ENCODE measurements at regions of chr11 and their contacts with region 1.

Region 1: GRCh38 chr11:87097582-87097981 is 59.8 kb downstream of the TMEM135 start:
- DNase-seq: peak; percentile 62 to 84 (median 66)
- ATAC-seq: peak; percentile 99
- H3K4me3 ChIP-seq: no peak overlapping the region
- H3K27ac ChIP-seq: peak overlapping the region; percentile 48; the same call in 2 of the 3 replicates
- H3K4me1 ChIP-seq: peaks cover 0 to 9% of the 10 kb centered on the region in 2 experiments; a peak in 2 of 5 replicates
- H3K27me3 ChIP-seq: no peaks in the 10 kb centered on the region
- CTCF ChIP-seq: peak; percentile 76 to 81 (median 80)
- EP300 ChIP-seq: no peak
- POLR2A ChIP-seq: no peak
- RAD21 ChIP-seq: peak; percentile 38 to 57; a peak in 3 of 4 replicates

Region 2: DNA sequence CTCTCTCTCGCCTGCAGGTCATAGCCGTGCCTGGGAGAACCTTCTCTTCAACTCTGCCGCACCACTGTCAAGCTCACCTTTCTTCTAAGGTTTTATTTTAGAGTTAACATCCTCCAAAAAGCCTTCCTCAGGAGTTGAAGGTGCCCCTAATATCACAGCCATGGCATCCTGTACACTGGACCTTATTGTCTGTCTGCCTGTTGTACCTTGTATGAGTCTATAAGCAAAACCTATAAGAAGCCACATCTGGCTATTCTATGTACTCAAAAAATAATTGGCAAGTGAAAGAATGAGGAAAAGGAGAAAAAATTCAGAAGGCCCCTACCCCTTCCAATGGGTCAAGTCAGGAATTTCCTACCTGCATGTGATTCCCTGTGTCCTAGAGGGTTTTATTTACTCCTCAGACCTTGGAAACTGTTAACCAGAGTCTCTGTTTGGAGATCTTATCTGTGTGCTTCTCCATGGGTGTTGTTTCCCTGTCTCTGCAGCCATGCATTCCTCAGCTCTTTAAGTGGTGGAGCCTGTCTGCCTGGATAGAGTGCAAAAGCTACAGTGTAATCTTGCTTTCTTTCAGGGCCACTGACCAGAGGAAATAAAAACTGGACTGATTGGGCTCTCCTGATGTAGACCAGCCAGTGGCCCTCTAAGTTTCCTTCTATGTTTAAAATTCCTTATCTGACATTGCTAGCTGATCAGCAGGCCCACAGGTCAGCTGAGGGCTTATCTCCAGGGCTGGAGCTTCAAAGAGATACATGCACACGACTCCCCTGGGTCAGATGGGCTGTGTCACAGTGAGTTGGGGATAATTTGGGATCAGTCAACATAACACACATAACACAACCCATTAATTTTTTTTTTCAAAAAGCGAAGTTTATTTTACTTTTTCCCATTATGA is 97.5 kb before region 1 on chr11:
- CTCF ChIA-PET with region 1: no interaction called
- POLR2A ChIA-PET with region 1: no interaction called
- in situ Hi-C with region 1: no loop called
- intact Hi-C with region 1: loop called (anchors 5 kb)
- DNase-seq: peak; percentile 68 to 96 (median 81)
- ATAC-seq: peak; percentile 91
- H3K4me3 ChIP-seq: peak overlapping the region; percentile 12; the same call in 1 of the 2 replicates
- H3K27ac ChIP-seq: peak overlapping the region; percentile 87
- H3K4me1 ChIP-seq: peaks cover 18 to 42% of the 10 kb centered on the region in 2 experiments; a peak in 4 of 5 replicates
- H3K27me3 ChIP-seq: no peaks in the 10 kb centered on the region
- CTCF ChIP-seq: no peak
- EP300 ChIP-seq: peak; percentile 96
- POLR2A ChIP-seq: peak; percentile 53
- RAD21 ChIP-seq: peak; percentile 15 to 29; a peak in 3 of 4 replicates

Region 3: DNA sequence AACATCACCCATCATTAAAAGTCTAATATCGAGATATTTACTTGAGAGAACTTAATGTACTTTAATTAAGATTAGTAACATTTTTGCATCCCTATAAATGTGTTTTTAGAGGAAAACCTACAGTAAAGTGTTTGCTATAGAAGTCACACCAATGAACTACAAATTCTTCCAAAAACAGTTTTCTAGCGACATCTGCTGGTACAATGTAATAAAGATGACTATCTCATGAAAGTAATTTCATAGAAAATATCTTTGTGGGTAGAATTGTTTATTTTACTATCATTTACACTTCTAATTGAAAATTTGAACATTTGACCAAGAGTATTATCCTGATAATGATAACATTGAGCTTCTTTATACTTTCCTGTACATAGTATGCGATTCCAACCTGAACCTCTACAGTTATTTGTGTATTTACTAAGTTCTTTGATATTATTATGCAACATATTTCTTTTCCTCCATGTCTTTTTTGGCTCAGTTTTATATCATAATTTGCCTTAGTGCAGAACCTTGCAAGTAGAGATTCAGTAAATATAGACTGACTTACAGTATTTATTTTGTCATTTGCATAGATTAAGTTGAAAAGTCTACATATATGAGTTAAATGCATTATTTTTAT is 192.8 kb after region 1 on chr11:
- CTCF ChIA-PET with region 1: no interaction called
- POLR2A ChIA-PET with region 1: no interaction called
- in situ Hi-C with region 1: no loop called
- intact Hi-C with region 1: loop called (anchors 5 kb)
- DNase-seq: peak; percentile 25 to 72 (median 33)
- ATAC-seq: peak; percentile 80
- H3K4me3 ChIP-seq: no peak overlapping the region
- H3K27ac ChIP-seq: no peak overlapping the region
- H3K4me1 ChIP-seq: no peaks in the 10 kb centered on the region
- H3K27me3 ChIP-seq: no peaks in the 10 kb centered on the region
- CTCF ChIP-seq: peak in 2 of 3 experiments; percentile 42 to 80; a peak in 3 of 6 replicates
- EP300 ChIP-seq: no peak
- POLR2A ChIP-seq: no peak
- RAD21 ChIP-seq: peak; percentile 88 to 90

Region 4: DNA sequence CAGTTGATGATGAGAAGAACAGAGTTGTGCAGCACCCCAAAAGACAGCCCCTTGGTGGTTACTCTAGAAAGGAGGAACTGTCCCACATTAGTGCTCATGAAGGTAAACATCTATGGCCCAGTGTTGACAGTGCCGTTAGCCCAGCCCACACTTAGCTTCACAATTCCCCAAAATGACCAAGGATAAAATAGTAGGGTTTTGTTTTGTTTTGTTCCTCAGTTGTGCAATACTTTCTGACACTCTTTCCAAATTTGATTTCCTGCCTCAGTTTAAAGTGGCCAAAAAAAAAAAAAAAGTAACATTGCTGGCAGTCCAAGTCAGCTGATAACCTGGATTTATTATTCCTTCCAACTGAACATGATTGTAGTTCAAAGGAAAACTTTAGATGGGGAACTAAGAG is 209.5 kb after region 1 on chr11:
- CTCF ChIA-PET with region 1: no interaction called
- POLR2A ChIA-PET with region 1: no interaction called
- in situ Hi-C with region 1: no loop called
- intact Hi-C with region 1: no loop called
- DNase-seq: no peak
- ATAC-seq: no peak
- H3K4me3 ChIP-seq: no peak overlapping the region
- H3K27ac ChIP-seq: no peak overlapping the region
- H3K4me1 ChIP-seq: no peaks in the 10 kb centered on the region
- H3K27me3 ChIP-seq: no peaks in the 10 kb centered on the region
- CTCF ChIP-seq: no peak
- EP300 ChIP-seq: no peak
- POLR2A ChIP-seq: no peak
- RAD21 ChIP-seq: no peak

Region 5: GRCh38 chr11:87722756-87723565 is 625.4 kb after region 1 on chr11:
- CTCF ChIA-PET with region 1: no interaction called
- POLR2A ChIA-PET with region 1: no interaction called
- in situ Hi-C with region 1: no loop called
- intact Hi-C with region 1: no loop called
- DNase-seq: peak in 3 of 4 experiments; percentile 13 to 17 (median 16)
- ATAC-seq: no peak
- H3K4me3 ChIP-seq: no peak overlapping the region
- H3K27ac ChIP-seq: no peak overlapping the region
- H3K4me1 ChIP-seq: no peaks in the 10 kb centered on the region
- H3K27me3 ChIP-seq: no peaks in the 10 kb centered on the region
- CTCF ChIP-seq: peak; percentile 28 to 53 (median 39); a peak in 4 of 6 replicates
- EP300 ChIP-seq: no peak
- POLR2A ChIP-seq: no peak
- RAD21 ChIP-seq: peak in 1 of 2 experiments; percentile 29; a peak in 2 of 4 replicates

Measured in K562 (cell line).